Endothelial cell of umbilical vein (primary cell): ENCODE measurements at regions of chr4 and their contacts with region 1.

Region 1: DNA sequence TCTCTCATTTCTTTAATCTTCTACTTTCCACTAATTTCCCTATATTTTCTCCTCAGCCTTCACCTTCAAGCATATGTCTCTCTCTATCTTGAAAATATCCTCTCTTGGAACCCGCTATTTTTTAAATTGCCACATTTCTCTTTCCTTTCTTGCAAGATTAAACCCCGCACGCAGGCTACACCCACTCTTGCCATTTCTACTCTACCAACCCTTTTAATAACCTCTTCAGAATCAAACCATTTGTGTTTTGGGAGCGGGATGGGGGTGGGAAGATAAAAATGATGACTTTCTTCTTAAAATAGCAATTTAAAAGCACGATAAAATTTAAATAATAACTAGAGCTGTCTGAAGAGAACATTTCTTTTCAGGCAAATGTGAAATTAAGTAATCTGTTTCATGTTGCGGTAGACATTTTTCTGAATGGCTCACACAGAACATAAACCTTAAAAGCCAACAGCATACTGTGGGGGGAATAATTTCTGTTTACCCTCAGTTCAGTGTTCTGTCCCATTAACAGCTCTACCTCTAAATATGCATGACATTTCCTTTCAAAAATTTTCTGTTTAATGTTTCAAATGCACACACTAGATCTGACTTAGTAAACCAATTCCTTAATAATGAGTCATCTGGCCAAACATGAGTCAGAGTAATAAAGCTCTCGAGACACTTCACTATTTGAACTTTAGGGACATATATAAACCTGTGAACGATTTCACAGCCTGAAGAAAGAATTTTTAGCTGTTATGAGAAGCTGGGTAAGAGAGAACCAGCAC is 20.5 kb downstream of the ARSJ start:
- DNase-seq: peak; percentile 95
- H3K4me3 ChIP-seq: peak overlapping the region in 2 of 3 experiments; percentile 10 to 83
- H3K27ac ChIP-seq: peak overlapping the region; percentile 89
- H3K4me1 ChIP-seq: peaks cover 69% of the 10 kb centered on the region
- H3K27me3 ChIP-seq: no peaks in the 10 kb centered on the region
- CTCF ChIP-seq: no peak
- POLR2A ChIP-seq: peak; percentile 70

Region 2: DNA sequence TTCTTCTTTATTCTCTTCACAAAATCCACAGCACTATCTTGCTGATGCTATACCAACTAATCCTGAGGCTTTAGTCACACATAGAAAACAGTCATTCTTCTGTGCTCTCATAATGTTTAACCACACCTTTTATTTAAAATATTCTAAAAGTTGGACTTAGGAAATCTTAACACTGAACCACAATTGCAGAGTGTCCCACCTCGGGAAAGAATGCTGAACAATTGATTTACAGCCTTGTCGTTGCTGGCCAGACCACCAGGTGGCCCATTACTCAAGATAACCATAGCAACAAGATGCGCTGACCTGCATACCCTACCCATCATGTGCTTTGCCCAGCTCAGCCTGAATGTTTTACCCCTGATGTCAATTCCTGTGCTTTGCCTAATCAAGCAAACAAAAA is 80.3 kb before region 1 on chr4:
- CTCF ChIA-PET with region 1: no interaction called
- POLR2A ChIA-PET with region 1: no interaction called
- dilution Hi-C with region 1: no loop called
- intact Hi-C with region 1: loop called (anchors 2 kb)
- DNase-seq: peak; percentile 40
- H3K4me3 ChIP-seq: no peak overlapping the region
- H3K27ac ChIP-seq: no peak overlapping the region
- H3K4me1 ChIP-seq: peaks cover 16% of the 10 kb centered on the region
- H3K27me3 ChIP-seq: no peaks in the 10 kb centered on the region
- CTCF ChIP-seq: peak; percentile 25 to 30
- POLR2A ChIP-seq: no peak

Region 3: GRCh38 chr4:113971706-113972360 is 12.9 kb after region 1 on chr4:
- CTCF ChIA-PET with region 1: interaction called, 27 read pairs
- POLR2A ChIA-PET with region 1: interaction called, 16 read pairs
- dilution Hi-C with region 1: no loop called
- intact Hi-C with region 1: loop called (anchors 1 kb)
- DNase-seq: peak; percentile 80
- H3K4me3 ChIP-seq: no peak overlapping the region
- H3K27ac ChIP-seq: peak overlapping the region; percentile 77
- H3K4me1 ChIP-seq: peaks cover 39% of the 10 kb centered on the region
- H3K27me3 ChIP-seq: no peaks in the 10 kb centered on the region
- CTCF ChIP-seq: no peak
- POLR2A ChIP-seq: no peak

Region 4: GRCh38 chr4:114077610-114078009 is 118.7 kb after region 1 on chr4:
- CTCF ChIA-PET with region 1: interaction called, 20 read pairs
- POLR2A ChIA-PET with region 1: no interaction called
- dilution Hi-C with region 1: no loop called
- intact Hi-C with region 1: no loop called
- DNase-seq: peak; percentile 92
- H3K4me3 ChIP-seq: no peak overlapping the region
- H3K27ac ChIP-seq: peak overlapping the region; percentile 58
- H3K4me1 ChIP-seq: peaks cover 13% of the 10 kb centered on the region
- H3K27me3 ChIP-seq: no peaks in the 10 kb centered on the region
- CTCF ChIP-seq: no peak
- POLR2A ChIP-seq: no peak

Region 5: DNA sequence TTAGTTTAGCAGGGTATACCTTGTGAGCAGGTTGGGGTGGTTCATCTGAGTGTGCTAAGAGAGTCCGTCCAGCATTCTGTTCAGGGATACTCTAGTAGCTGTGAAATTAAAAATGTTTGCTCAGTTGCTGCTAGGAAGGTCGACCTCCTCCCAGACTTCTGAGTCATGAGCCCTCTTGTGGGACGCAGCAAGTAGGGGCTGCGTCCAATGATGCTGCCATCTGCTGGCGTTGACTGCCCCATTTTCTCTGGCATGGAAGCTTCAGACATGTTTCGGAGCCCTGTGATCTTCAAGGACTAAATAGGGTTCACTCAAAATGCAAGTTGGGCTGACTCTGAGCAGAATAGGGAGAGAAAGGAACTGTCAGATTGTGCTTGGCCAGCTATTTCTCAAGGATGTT is 221.5 kb after region 1 on chr4:
- CTCF ChIA-PET with region 1: interaction called, 12 read pairs
- POLR2A ChIA-PET with region 1: no interaction called
- dilution Hi-C with region 1: no loop called
- intact Hi-C with region 1: no loop called
- DNase-seq: peak; percentile 87
- H3K4me3 ChIP-seq: no peak overlapping the region
- H3K27ac ChIP-seq: no peak overlapping the region
- H3K4me1 ChIP-seq: no peaks in the 10 kb centered on the region
- H3K27me3 ChIP-seq: no peaks in the 10 kb centered on the region
- CTCF ChIP-seq: peak; percentile 69 to 79
- POLR2A ChIP-seq: no peak

Region 6: DNA sequence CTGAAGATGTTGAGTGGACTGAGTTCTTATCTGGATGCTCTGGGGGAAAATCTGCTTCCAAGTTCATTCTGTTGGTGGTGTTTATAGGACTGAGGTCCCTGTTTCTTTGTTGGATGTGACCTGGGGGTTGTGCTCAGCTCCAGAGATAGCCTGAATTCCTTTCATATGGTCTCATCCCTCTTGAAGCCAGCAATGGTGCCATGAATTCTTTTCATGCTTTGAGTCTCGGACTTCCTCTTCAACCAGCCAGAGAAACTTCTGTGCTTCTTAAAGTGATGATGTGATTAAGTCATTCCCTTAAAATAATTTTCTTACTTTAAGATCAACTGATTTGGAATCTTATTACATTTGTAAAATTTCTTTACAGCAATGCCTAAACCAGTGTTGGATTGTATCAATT is 405.9 kb after region 1 on chr4:
- CTCF ChIA-PET with region 1: no interaction called
- POLR2A ChIA-PET with region 1: no interaction called
- dilution Hi-C with region 1: no loop called
- intact Hi-C with region 1: no loop called
- DNase-seq: no peak
- H3K4me3 ChIP-seq: no peak overlapping the region
- H3K27ac ChIP-seq: no peak overlapping the region
- H3K4me1 ChIP-seq: no peaks in the 10 kb centered on the region
- H3K27me3 ChIP-seq: no peaks in the 10 kb centered on the region
- CTCF ChIP-seq: no peak
- POLR2A ChIP-seq: no peak